CD8-positive, alpha-beta T cell (primary cell): ENCODE measurements at regions of chr5 and their contacts with region 1.

Region 1: DNA sequence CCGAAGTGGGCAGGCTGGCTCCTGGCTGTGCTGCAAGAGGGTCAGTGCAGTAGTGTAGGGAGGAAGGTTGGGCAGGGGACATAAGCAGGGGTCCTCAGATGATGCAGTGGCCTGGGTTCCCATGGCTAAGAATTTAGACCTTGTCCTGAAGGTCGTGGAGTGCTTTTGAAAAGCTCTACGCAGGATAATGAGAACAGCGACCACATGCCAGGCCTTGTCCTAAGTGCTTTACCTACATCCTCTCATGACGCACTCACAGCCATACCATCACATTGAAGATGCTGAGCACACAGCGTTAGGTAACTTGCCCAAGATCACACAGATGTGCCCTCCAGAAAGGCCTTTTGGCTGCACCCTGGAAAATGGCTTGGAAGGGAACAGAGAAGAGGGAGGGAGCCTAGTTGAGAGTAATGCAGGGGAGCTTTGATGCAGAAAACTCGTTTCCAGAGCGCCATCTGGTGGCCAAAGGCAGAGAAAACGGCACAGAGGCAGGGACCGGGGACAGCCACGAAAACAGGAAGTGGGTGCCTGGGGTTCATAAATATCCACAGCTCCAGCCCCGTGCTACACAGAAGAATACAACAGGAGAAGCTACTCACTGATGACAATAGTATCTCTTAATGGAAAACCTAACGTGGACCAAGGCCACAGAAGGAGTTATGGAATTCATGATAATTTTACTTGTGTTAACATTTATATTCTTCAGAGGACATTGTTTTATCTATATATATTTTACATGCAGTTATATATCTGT is 2.6 kb upstream of the PCDH12 start:
- DNase-seq: peak; percentile 81 to 97 (median 91)
- ATAC-seq: peak; percentile 99
- H3K4me3 ChIP-seq: no peak overlapping the region
- H3K4me3 Mint-ChIP-seq: peak overlapping the region; percentile 59
- H3K27ac ChIP-seq: peak overlapping the region in 1 of 2 experiments; percentile 66
- H3K27ac Mint-ChIP-seq: peak overlapping the region; percentile 95
- H3K4me1 ChIP-seq: peaks cover 42% of the 10 kb centered on the region
- H3K4me1 Mint-ChIP-seq: peaks cover 43% of the 10 kb centered on the region
- H3K27me3 ChIP-seq: no peaks in the 10 kb centered on the region
- H3K27me3 Mint-ChIP-seq: no peaks in the 10 kb centered on the region
- CTCF ChIP-seq: peak; percentile 83

Region 2: GRCh38 chr5:141512390-141512910 is 448.2 kb before region 1 on chr5:
- CTCF ChIA-PET with region 1: no interaction called
- POLR2A ChIA-PET with region 1: no interaction called
- intact Hi-C with region 1: no loop called
- DNase-seq: peak; percentile 68 to 91 (median 82)
- ATAC-seq: peak; percentile 51
- H3K4me3 ChIP-seq: peak overlapping the region; percentile 50 to 54
- H3K4me3 Mint-ChIP-seq: peak overlapping the region; percentile 87
- H3K27ac ChIP-seq: no peak overlapping the region
- H3K27ac Mint-ChIP-seq: no peak overlapping the region
- H3K4me1 ChIP-seq: peaks cover 21% of the 10 kb centered on the region
- H3K4me1 Mint-ChIP-seq: peaks cover 36% of the 10 kb centered on the region
- H3K27me3 ChIP-seq: no peaks in the 10 kb centered on the region
- H3K27me3 Mint-ChIP-seq: no peaks in the 10 kb centered on the region
- CTCF ChIP-seq: peak; percentile 83

Region 3: DNA sequence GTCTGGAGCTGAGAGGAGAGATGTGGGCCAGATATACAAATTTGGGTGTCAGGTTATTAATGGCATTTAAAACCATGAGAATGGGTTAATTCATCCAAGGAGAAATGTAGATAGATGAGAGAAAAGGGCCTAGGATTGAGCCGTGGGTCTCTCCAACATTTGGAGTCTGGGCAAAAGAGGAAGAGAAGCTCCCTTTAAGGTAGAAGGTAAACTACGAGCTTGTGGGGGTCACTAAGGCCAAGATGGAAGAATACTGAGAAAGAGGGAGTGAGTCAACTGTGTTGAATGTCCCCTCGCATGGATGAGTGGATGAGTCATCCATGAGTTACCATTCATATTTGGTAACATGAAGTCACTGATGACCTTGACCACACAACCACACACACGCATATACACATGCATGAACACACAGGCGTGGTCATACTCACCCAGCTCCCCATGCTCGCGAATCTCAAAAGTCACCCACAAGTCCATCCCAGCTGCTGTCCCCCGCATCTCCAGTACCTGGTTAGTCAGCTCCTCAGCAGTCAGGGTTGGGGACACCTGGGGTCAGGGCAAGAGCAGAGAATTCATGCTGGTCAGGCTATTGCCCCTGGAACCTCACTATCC is 302.6 kb before region 1 on chr5:
- CTCF ChIA-PET with region 1: interaction called, 56 read pairs
- POLR2A ChIA-PET with region 1: no interaction called
- intact Hi-C with region 1: no loop called
- DNase-seq: no peak
- ATAC-seq: no peak
- H3K4me3 ChIP-seq: no peak overlapping the region
- H3K4me3 Mint-ChIP-seq: no peak overlapping the region
- H3K27ac ChIP-seq: no peak overlapping the region
- H3K27ac Mint-ChIP-seq: no peak overlapping the region
- H3K4me1 ChIP-seq: no peaks in the 10 kb centered on the region
- H3K4me1 Mint-ChIP-seq: peaks cover under 1% of the 10 kb centered on the region
- H3K27me3 ChIP-seq: no peaks in the 10 kb centered on the region
- H3K27me3 Mint-ChIP-seq: peaks cover 3% of the 10 kb centered on the region
- CTCF ChIP-seq: no peak

Region 4: GRCh38 chr5:141672848-141673813 is 287.5 kb before region 1 on chr5:
- CTCF ChIA-PET with region 1: interaction called, 18 read pairs
- POLR2A ChIA-PET with region 1: no interaction called
- intact Hi-C with region 1: no loop called
- DNase-seq: no peak
- ATAC-seq: no peak
- H3K4me3 ChIP-seq: no peak overlapping the region
- H3K4me3 Mint-ChIP-seq: no peak overlapping the region
- H3K27ac ChIP-seq: no peak overlapping the region
- H3K27ac Mint-ChIP-seq: no peak overlapping the region
- H3K4me1 ChIP-seq: no peaks in the 10 kb centered on the region
- H3K4me1 Mint-ChIP-seq: no peaks in the 10 kb centered on the region
- H3K27me3 ChIP-seq: no peaks in the 10 kb centered on the region
- H3K27me3 Mint-ChIP-seq: no peaks in the 10 kb centered on the region
- CTCF ChIP-seq: no peak

Region 5: GRCh38 chr5:141701360-141702119 is 259.1 kb before region 1 on chr5:
- CTCF ChIA-PET with region 1: interaction called, 244 read pairs
- POLR2A ChIA-PET with region 1: interaction called, 6 read pairs
- intact Hi-C with region 1: loop called in 1 of 2 experiments (anchors 1 kb)
- DNase-seq: peak in 1 of 9 experiments; percentile 30
- ATAC-seq: peak; percentile 13
- H3K4me3 ChIP-seq: peak overlapping the region; percentile 57 to 89
- H3K4me3 Mint-ChIP-seq: no peak overlapping the region
- H3K27ac ChIP-seq: no peak overlapping the region
- H3K27ac Mint-ChIP-seq: no peak overlapping the region
- H3K4me1 ChIP-seq: peaks cover 15% of the 10 kb centered on the region
- H3K4me1 Mint-ChIP-seq: peaks cover 19% of the 10 kb centered on the region
- H3K27me3 ChIP-seq: peaks cover 0 to 3% of the 10 kb centered on the region in 2 experiments
- H3K27me3 Mint-ChIP-seq: peaks cover 45% of the 10 kb centered on the region
- CTCF ChIP-seq: no peak

Region 6: DNA sequence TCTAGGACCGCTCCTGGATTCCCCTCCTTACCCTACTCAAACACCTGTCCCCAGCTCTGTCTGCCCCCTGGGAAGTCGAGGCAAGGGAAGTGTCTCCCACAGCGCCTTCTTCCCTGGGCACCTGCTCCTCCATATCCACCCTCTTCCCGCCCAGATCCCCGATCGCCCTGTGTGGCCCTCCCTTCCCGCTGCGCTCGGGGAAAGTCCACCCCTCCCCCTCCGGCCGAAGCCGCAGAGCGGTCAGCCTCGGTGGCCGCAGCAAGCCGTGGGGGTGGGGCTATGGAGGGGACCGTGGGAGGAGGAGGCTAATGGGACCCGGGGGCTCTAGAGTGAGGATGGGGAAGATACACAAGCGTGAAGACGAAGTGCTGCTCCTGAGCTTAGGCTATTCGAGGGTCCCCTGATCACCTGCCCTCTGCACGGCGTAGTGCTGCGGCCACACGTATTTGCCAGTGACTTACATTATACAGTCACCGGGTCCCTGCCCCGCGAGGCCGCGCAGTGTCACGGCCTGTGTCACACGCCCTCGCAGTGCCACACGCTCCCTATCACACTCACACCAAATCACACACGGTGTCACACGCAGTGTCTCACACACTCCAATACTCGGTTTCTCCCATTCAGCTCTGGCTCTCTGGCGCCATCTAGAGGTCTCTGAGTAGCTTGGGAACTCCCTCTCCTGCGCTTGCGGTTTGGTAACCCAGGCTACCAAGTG is 81.8 kb before region 1 on chr5:
- CTCF ChIA-PET with region 1: interaction called, 84 read pairs
- POLR2A ChIA-PET with region 1: interaction called, 10 read pairs
- intact Hi-C with region 1: loop called in 1 of 2 experiments (anchors 1 kb)
- DNase-seq: peak; percentile 73 to 96 (median 90)
- ATAC-seq: peak; percentile 84
- H3K4me3 ChIP-seq: peak overlapping the region; percentile 48 to 73
- H3K4me3 Mint-ChIP-seq: peak overlapping the region; percentile 76
- H3K27ac ChIP-seq: no peak overlapping the region
- H3K27ac Mint-ChIP-seq: peak overlapping the region; percentile 1
- H3K4me1 ChIP-seq: peaks cover 35% of the 10 kb centered on the region
- H3K4me1 Mint-ChIP-seq: peaks cover 26% of the 10 kb centered on the region
- H3K27me3 ChIP-seq: peaks cover 43 to 60% of the 10 kb centered on the region in 2 experiments
- H3K27me3 Mint-ChIP-seq: peaks cover 76% of the 10 kb centered on the region
- CTCF ChIP-seq: peak; percentile 98

Region 7: DNA sequence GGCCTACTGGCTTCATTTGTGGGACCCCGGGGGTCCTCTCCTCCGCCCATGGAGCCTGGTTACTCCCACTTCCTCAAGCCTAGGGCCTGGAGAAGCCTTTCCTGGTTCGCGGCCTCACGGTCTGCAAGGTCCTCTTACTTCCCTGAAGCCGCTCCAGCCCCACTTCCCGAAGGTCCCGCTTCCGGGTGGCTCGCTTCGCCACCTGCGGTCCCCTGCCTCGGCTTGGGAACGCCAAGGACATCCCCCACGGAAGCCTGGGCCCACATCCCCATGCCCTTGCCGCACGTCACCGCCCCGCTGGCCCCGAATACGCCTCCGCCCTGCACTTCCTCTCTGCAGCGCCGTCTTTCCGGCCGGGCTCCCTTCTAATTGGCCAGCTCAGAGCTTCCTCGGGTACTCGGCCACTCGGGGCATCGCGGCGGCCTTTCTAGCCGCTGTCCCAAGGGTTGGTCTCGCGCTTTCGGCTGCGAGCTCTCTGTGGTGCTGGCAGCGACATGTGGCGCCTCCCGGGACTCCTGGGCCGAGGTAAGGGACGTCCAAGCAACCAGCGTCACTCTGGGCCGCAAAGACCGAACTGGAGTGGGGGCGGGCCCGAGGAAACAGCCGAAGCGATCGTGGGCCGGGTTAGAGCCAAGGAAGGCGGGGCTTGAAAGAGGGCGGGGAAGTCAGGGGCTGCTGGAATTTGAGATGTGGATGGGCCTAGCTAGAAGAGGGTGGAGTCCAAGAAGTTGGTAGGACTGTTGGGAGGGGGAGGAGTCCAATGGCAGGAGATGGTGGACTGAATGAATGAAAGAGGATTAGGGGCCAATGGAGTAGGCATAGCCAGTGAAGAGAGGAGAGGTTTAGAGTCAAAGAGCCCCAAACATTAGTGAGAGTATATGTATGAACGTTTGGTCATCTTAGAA is 36.9 kb before region 1 on chr5 and contains the start of gene DELE1:
- CTCF ChIA-PET with region 1: interaction called, 18 read pairs
- POLR2A ChIA-PET with region 1: interaction called, 30 read pairs
- intact Hi-C with region 1: loop called in 1 of 2 experiments (anchors 2 kb)
- DNase-seq: peak; percentile 77 to 95 (median 91)
- ATAC-seq: peak; percentile 93
- H3K4me3 ChIP-seq: peak within 1 kb of the TSS; percentile 65 to 88
- H3K4me3 Mint-ChIP-seq: peak within 1 kb of the TSS; percentile 95
- H3K27ac ChIP-seq: peak within 1 kb of the TSS; percentile 98
- H3K27ac Mint-ChIP-seq: peak within 1 kb of the TSS; percentile 98
- H3K4me1 ChIP-seq: peaks cover 16% of the 10 kb centered on the region
- H3K4me1 Mint-ChIP-seq: peaks cover 40% of the 10 kb centered on the region
- H3K27me3 ChIP-seq: no peaks in the 10 kb centered on the region
- H3K27me3 Mint-ChIP-seq: no peaks in the 10 kb centered on the region
- CTCF ChIP-seq: no peak
- total RNA-seq, gene DELE1: 61.7 to 65.0 TPM

Region 8: DNA sequence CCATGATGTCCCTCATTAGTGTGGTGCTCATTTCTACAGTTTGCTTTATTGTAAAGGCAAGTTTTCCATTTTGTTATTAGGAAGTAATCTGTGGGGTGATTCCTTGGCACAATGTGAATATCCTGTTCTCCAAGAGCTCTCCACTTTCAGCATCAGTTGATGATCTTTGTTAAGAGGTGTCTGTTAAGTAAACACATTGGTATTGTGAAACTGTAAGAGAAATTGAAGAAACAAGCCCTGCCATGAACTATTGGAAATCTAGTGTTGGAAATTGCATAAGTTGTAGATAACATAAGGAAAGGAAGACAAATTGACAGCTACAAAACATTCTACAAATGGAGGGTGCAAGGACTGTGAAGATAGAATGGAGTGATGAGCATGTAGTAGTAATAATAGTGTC is 25.4 kb after region 1 on chr5:
- CTCF ChIA-PET with region 1: interaction called, 10 read pairs
- POLR2A ChIA-PET with region 1: no interaction called
- intact Hi-C with region 1: no loop called
- DNase-seq: no peak
- ATAC-seq: no peak
- H3K4me3 ChIP-seq: no peak overlapping the region
- H3K4me3 Mint-ChIP-seq: no peak overlapping the region
- H3K27ac ChIP-seq: no peak overlapping the region
- H3K27ac Mint-ChIP-seq: no peak overlapping the region
- H3K4me1 ChIP-seq: no peaks in the 10 kb centered on the region
- H3K4me1 Mint-ChIP-seq: no peaks in the 10 kb centered on the region
- H3K27me3 ChIP-seq: no peaks in the 10 kb centered on the region
- H3K27me3 Mint-ChIP-seq: no peaks in the 10 kb centered on the region
- CTCF ChIP-seq: no peak